ENCODE measurements at regions of chr11 and their contacts with region 1.

Region 1: GRCh38 chr11:63573881-63574855 is 11.0 kb upstream of the PLAAT2 start:
- DNase-seq: peak in 1 of 10 donors; percentile 43
- H3K4me3 ChIP-seq: peak overlapping the region in 29 of 59 donors; percentile 2 to 41 (median 19)
- H3K27ac ChIP-seq: peak overlapping the region; percentile 60 to 94 (median 87)
- H3K27me3 ChIP-seq: no peaks in the 10 kb centered on the region
- CTCF ChIP-seq: peak in 16 of 56 donors; percentile 10 to 56 (median 18)

Region 2: DNA sequence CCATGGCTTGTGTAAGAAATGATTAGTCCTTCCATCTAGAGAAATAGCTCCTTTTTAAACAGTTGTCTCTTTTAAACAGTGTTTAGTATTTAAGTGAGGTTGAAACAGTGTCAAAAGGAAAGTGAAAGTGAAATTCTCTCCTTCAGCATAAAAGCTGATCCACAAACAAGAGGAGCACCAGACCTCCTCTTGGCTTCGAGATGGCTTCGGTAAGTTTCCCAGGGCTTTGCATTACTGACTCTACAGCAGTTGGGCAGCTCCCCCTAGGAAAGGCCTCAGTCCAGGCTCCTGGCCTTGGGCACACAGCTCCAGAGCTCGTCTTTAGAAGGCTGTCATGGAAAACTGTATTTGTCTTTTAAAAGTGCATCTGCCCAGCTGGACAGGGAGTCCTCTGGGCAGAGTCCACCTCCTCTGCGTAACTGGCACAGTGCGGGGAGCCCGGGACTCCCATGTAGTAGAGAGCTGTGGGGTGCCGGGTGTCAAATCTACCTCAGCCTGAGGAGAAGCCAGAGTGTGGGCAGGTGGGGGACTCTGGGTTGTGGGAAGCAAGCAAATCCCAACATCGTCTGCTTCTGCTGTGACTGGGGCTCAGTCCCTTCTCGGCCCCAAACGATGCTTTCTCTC is 37.4 kb before region 1 on chr11 and contains the start of gene PLAAT4:
- intact Hi-C with region 1: loop called in 1 of 2 experiments (anchors 5 kb)
- DNase-seq: peak in 7 of 10 donors; percentile 42 to 66 (median 60)
- H3K4me3 ChIP-seq: peak within 1 kb of the TSS; percentile 30 to 70 (median 52)
- H3K27ac ChIP-seq: peak within 1 kb of the TSS; percentile 89 to 100 (median 98)
- H3K27me3 ChIP-seq: no peaks in the 10 kb centered on the region
- CTCF ChIP-seq: peak in 25 of 56 donors; percentile 10 to 43 (median 27)
- total RNA-seq, gene PLAAT4: 11.2 to 117 (median 25.4) TPM